Right ventricle myocardium superior (tissue), 1 donor: ENCODE measurements at regions of chr1 and their contacts with region 1.

Region 1: DNA sequence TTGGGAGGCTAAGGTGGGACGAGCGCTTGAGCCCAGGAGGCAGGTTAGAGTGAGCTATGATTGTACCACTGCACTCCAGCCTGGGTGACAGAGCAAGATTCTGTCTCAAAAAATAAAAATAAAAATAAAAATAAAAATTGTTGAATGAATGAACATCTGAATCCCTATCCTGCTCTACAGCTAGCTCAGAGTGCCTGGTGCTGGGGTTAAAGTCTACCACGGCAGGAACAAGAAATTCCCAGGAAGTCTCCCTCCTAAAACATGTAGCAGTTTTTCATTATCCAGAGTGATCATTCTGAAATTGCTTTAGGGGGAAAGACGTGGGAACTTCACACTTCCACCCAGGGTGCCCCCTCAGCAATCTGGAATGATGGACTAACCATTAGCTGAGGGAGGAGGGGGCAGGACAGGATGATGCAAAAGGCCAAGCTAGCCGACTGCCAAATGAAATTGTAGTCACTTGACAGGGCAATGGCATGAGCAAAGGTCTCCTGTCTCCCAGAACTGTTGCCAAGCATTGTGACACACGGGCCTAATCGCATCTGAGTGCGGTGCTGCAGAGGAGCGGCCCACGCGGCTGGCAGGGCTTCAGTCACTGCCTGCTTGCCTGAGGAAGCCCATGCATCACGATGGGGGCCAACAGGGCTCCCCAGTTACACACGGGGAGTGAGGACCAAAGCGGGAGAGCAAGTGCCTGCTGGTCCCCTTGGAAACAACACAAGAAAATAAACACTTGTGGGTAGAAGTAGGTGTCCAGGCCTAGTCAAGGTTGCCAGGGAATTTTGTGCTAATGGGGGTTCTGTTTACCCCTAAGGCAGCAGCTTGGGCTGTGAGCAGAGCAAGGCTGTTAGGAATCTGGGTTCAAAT is 85.7 kb downstream of the NENF start:
- DNase-seq: peak; percentile 89
- ATAC-seq: peak; percentile 91

Region 2: GRCh38 chr1:212566522-212567479 is 48.4 kb after region 1 on chr1:
- intact Hi-C with region 1: loop called (anchors 5 kb)
- DNase-seq: no peak
- ATAC-seq: peak; percentile 82

Region 3: GRCh38 chr1:213051127-213051880 is 532.9 kb after region 1 on chr1 and contains the start of gene RPS6KC1:
- intact Hi-C with region 1: no loop called
- DNase-seq: peak; percentile 92
- ATAC-seq: peak; percentile 100
- total RNA-seq, gene RPS6KC1: 9.7 TPM